K562 (cell line): ENCODE measurements at regions of chr3 and their contacts with region 1.

Region 1: DNA sequence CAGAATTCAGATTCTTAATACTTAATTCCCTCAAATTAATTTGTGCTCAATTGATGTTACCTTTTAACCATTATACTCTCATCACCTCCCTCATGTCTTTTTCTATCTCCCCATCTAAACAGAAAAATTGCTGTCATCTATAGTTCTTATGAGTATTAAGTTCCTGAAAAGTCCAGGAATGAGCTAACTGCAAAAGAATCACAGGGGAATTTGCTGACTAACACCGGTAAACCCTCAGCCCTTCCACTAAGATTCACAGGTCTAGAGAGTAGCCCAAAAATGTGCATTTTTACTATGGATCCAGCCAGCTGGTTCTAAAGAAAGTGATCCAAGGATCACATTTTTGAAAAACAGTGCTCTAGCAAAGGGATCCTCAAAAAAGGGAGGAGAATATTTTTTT is 67.0 kb downstream of the SETD2 start:
- DNase-seq: no peak
- ATAC-seq: no peak
- H3K4me3 ChIP-seq: no peak overlapping the region
- H3K27ac ChIP-seq: no peak overlapping the region
- H3K4me1 ChIP-seq: no peaks in the 10 kb centered on the region
- H3K27me3 ChIP-seq: no peaks in the 10 kb centered on the region
- CTCF ChIP-seq: no peak
- EP300 ChIP-seq: no peak
- POLR2A ChIP-seq: no peak
- RAD21 ChIP-seq: no peak

Region 2: DNA sequence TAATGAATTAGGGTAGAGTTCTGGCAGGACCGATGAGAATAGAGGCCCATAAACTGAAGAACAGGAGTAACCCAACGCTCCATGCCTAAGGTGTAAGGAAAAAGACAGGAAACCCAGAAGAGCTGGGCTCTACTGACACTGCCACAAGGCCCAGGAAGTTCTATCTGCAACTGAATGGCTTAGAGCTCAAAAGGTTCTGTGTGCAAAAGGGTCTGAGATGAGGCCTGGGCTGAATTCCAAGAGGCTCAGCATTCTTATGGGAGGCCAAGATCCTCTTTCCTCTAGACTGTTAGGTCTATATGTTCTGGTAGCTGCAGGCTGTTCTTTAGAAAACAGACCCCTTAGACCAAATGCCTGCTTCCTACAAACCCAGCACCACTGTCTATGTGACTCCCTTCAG is 348.8 kb before region 1 on chr3:
- CTCF ChIA-PET with region 1: no interaction called
- POLR2A ChIA-PET with region 1: no interaction called
- in situ Hi-C with region 1: no loop called
- intact Hi-C with region 1: no loop called
- DNase-seq: no peak
- ATAC-seq: no peak
- H3K4me3 ChIP-seq: no peak overlapping the region
- H3K27ac ChIP-seq: no peak overlapping the region
- H3K4me1 ChIP-seq: peaks cover 3 to 11% of the 10 kb centered on the region in 2 experiments; a peak in 3 of 5 replicates
- H3K27me3 ChIP-seq: peaks cover 30 to 64% of the 10 kb centered on the region in 2 experiments
- CTCF ChIP-seq: no peak
- EP300 ChIP-seq: no peak
- POLR2A ChIP-seq: no peak
- RAD21 ChIP-seq: no peak

Region 3: GRCh38 chr3:47108546-47108945 is 11.6 kb after region 1 on chr3:
- CTCF ChIA-PET with region 1: no interaction called
- POLR2A ChIA-PET with region 1: interaction called, 10 read pairs
- in situ Hi-C with region 1: no loop called
- intact Hi-C with region 1: no loop called
- DNase-seq: no peak
- ATAC-seq: no peak
- H3K4me3 ChIP-seq: no peak overlapping the region
- H3K27ac ChIP-seq: no peak overlapping the region
- H3K4me1 ChIP-seq: no peaks in the 10 kb centered on the region
- H3K27me3 ChIP-seq: no peaks in the 10 kb centered on the region
- CTCF ChIP-seq: no peak
- EP300 ChIP-seq: no peak
- POLR2A ChIP-seq: no peak
- RAD21 ChIP-seq: no peak